HepG2 (cell line): ENCODE measurements at regions of chr17 and their contacts with region 1.

Region 1: GRCh38 chr17:57084802-57085447 is at the start of gene AKAP1:
- DNase-seq: peak; percentile 92
- ATAC-seq: peak; percentile 72
- H3K4me3 ChIP-seq: peak within 1 kb of the TSS; percentile 84 to 100 (median 94)
- H3K27ac ChIP-seq: peak within 1 kb of the TSS; percentile 92
- H3K4me1 ChIP-seq: peaks cover 62% of the 10 kb centered on the region
- H3K27me3 ChIP-seq: no peaks in the 10 kb centered on the region; a peak in 1 of 5 replicates
- CTCF ChIP-seq: peak; percentile 80
- EP300 ChIP-seq: peak in 1 of 2 experiments; percentile 35; a peak in 2 of 4 replicates
- POLR2A ChIP-seq: peak; percentile 87 to 95
- RAD21 ChIP-seq: peak; percentile 50; the same call in 1 of the 2 replicates
- total RNA-seq, gene AKAP1: 46.4 and 101 TPM in 2 replicates

Region 2: DNA sequence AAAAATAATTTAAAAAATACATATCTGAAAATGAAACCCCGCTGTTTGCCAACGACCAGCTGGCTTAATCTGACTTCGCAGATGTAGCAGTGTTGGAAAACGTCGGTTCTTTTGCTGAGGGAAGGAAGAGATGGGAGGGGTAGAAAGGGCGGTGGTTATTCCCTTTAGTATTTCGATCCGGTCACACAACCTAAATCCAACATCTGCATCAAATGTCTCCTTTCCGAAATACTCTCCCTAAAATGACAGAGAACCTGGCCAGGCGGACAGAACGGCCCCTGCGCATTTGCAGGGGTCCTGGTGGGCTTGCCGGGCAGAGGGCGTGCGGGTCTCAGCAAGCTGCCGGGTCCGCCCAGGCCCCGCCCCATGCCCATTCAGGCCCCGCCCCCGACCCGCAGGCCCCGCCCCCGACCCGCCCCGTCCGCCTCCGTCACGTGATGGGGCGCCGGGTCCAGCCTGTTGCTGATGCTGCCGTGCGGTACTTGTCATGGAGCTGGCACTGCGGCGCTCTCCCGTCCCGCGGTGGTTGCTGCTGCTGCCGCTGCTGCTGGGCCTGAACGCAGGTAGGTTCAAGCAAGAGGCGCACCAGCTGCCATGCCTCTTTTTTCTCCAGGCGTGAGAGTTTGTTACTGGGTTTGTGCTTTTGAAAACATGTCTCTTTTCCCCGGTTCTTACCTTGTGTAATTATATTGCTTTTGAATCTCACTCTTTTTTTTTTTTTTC is 107.1 kb before region 1 on chr17 and contains the start of gene SCPEP1:
- CTCF ChIA-PET with region 1: no interaction called
- POLR2A ChIA-PET with region 1: interaction called, 7 read pairs
- in situ Hi-C with region 1: no loop called
- intact Hi-C with region 1: loop called (anchors 5 kb)
- DNase-seq: peak; percentile 79
- ATAC-seq: peak; percentile 97
- H3K4me3 ChIP-seq: peak within 1 kb of the TSS; percentile 51 to 81 (median 78)
- H3K27ac ChIP-seq: no peak within 1 kb of the TSS
- H3K4me1 ChIP-seq: peaks cover 23% of the 10 kb centered on the region
- H3K27me3 ChIP-seq: peaks cover 2 to 21% of the 10 kb centered on the region in 2 experiments; a peak in 4 of 5 replicates
- CTCF ChIP-seq: peak; percentile 30; the same call in 1 of the 2 replicates
- EP300 ChIP-seq: no peak
- POLR2A ChIP-seq: peak; percentile 81 to 85
- RAD21 ChIP-seq: no peak
- total RNA-seq, gene SCPEP1: 12.3 and 27.3 TPM in 2 replicates

Region 3: DNA sequence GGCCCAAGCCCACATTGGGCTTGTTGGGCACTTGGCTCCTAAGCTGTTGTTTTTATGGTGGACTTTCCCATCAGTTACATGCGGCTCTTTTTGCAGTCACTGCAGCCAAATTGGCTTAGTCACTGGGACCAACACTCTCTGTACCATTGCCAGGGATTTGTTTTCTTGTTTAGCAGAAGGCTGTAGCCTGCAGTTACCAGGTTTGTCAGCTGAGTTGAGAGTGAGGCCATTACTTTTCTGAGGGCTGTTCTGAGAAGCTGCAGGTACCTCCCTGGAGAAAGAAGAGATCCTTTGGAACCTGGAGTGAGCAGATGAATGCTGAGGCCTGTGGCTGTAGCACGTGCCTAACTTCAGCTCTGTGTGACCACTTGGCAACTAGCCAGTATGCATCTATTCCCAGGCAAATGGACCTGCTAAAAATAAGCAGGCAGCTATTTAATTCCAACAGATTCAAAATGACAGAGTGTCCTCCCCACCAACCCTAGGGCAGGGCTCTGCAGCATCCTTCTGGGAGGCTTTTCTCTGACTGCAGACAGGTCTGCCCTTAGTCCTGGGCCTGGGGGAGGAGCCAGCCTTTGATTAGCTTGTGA is 13.0 kb after region 1 on chr17:
- CTCF ChIA-PET with region 1: no interaction called
- POLR2A ChIA-PET with region 1: interaction called, 82 read pairs
- in situ Hi-C with region 1: no loop called
- intact Hi-C with region 1: no loop called
- DNase-seq: no peak
- ATAC-seq: no peak
- H3K4me3 ChIP-seq: no peak overlapping the region
- H3K27ac ChIP-seq: peak overlapping the region; percentile 15
- H3K4me1 ChIP-seq: peaks cover 49% of the 10 kb centered on the region
- H3K27me3 ChIP-seq: no peaks in the 10 kb centered on the region
- CTCF ChIP-seq: no peak
- EP300 ChIP-seq: no peak
- POLR2A ChIP-seq: no peak
- RAD21 ChIP-seq: no peak

Region 4: DNA sequence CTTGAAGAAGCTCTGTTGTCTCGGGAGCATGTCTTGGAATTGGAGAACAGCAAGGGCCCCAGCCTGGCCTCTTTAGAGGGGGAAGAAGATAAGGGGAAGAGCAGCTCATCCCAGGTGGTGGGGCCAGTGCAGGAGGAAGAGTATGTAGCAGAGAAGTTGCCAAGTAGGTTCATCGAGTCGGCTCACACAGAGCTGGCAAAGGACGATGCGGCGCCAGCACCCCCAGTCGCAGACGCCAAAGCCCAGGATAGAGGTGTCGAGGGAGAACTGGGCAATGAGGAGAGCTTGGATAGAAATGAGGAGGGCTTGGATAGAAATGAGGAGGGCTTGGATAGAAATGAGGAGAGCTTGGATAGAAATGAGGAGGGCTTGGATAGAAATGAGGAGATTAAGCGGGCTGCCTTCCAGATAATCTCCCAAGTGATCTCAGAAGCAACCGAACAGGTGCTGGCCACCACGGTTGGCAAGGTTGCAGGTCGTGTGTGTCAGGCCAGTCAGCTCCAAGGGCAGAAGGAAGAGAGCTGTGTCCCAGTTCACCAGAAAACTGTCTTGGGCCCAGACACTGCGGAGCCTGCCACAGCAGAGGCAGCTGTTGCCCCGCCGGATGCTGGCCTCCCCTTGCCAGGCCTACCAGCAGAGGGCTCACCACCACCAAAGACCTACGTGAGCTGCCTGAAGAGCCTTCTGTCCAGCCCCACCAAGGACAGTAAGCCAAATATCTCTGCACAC is 21.3 kb after region 1 on chr17:
- CTCF ChIA-PET with region 1: no interaction called
- POLR2A ChIA-PET with region 1: interaction called, 82 read pairs
- in situ Hi-C with region 1: no loop called
- intact Hi-C with region 1: no loop called
- DNase-seq: peak; percentile 62
- ATAC-seq: peak; percentile 85
- H3K4me3 ChIP-seq: no peak overlapping the region
- H3K27ac ChIP-seq: peak overlapping the region; percentile 55
- H3K4me1 ChIP-seq: peaks cover 79% of the 10 kb centered on the region
- H3K27me3 ChIP-seq: no peaks in the 10 kb centered on the region
- CTCF ChIP-seq: peak; percentile 83
- EP300 ChIP-seq: no peak
- POLR2A ChIP-seq: no peak
- RAD21 ChIP-seq: peak; percentile 78

Region 5: DNA sequence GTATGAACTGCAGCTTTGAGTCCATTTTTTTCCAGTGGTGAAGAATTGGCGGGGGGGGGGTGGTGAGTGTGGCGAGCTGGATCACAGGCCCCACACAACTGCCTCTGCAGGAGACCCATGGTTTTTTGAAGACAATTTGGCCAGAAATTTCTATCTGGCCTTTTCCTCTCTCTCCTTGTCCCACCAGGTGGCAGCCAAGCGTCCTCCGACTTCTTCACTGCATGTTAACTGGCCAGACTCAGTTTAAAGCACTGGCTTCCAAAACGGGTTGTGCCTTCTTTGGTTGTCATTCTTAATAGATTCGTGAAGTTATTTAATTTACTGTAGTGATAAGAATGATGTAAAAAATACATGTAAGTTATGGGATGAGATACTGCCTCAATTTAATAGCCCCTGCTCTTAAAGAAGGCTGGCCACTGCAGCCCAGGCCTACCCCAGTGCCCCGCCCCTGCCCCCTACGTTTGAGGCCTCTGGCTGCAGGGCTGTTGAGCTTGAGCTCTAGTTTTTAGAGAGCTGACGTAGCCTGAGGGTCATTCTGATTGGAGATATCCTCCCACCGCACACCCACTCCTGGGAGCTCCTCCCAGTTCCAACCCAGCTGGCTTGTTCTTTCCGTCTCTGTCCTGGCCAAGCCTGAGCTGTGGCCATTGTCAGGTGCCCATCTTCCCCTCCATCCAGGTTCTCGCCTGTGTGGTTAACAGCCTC is 36.6 kb after region 1 on chr17:
- CTCF ChIA-PET with region 1: no interaction called
- POLR2A ChIA-PET with region 1: interaction called, 8 read pairs
- in situ Hi-C with region 1: no loop called
- intact Hi-C with region 1: loop called (anchors 5 kb)
- DNase-seq: no peak
- ATAC-seq: peak; percentile 38
- H3K4me3 ChIP-seq: no peak overlapping the region
- H3K27ac ChIP-seq: peak overlapping the region; percentile 21
- H3K4me1 ChIP-seq: peaks cover 28% of the 10 kb centered on the region
- H3K27me3 ChIP-seq: no peaks in the 10 kb centered on the region
- CTCF ChIP-seq: peak; percentile 53
- EP300 ChIP-seq: no peak
- POLR2A ChIP-seq: no peak
- RAD21 ChIP-seq: 0 out of 2 replicates have a peak, but pooled peaks have one; percentile 17

Region 6: DNA sequence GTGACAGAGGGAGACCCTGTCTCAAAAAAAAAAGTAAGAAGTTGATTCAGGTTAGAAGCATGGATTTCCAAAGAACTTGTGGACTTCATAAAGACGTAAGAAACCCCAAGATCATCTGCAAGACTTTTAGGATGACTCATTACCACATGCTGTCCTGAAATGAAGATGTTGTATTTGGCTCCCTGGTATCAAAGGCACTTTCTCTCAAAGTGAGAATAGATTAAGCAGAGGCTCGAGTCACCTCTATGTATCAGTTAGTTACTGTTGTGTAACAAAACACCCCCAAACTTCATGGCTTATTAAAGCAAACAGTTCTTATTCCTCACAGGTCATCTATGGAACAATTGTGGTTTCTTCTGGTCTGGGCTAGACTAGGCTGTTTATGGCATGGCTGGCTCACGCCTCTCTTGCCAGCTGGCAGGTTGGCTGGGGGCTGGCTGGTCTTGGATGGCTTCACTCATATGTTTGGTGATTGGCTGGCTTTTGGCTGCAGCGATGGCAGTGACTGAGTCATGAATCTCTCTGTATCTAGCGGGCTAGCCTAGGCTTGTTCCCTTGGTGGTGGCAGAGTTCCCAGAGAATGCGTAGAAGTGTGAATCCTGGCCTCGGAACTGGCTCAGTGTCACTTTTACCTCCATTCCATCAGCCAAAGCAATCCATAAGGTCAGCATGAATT is 111.0 kb after region 1 on chr17:
- CTCF ChIA-PET with region 1: no interaction called
- POLR2A ChIA-PET with region 1: no interaction called
- in situ Hi-C with region 1: no loop called
- intact Hi-C with region 1: no loop called
- DNase-seq: no peak
- ATAC-seq: no peak
- H3K4me3 ChIP-seq: no peak overlapping the region
- H3K27ac ChIP-seq: no peak overlapping the region
- H3K4me1 ChIP-seq: no peaks in the 10 kb centered on the region
- H3K27me3 ChIP-seq: peaks cover 2 to 52% of the 10 kb centered on the region in 2 experiments; a peak in 4 of 5 replicates
- CTCF ChIP-seq: no peak
- EP300 ChIP-seq: no peak
- POLR2A ChIP-seq: no peak
- RAD21 ChIP-seq: no peak